Mammary epithelial cell (primary cell): ENCODE measurements at regions of chr10 and their contacts with region 1.

Region 1: GRCh38 chr10:99461230-99461629 is 30.8 kb upstream of the GOT1 start:
- DNase-seq: peak; percentile 80
- H3K4me3 ChIP-seq: no peak overlapping the region
- H3K27ac ChIP-seq: no peak overlapping the region
- H3K4me1 ChIP-seq: peaks cover 4% of the 10 kb centered on the region
- H3K27me3 ChIP-seq: no peaks in the 10 kb centered on the region
- CTCF ChIP-seq: no peak

Region 2: GRCh38 chr10:99406149-99406548 is 55.1 kb before region 1 on chr10:
- CTCF ChIA-PET with region 1: no interaction called
- dilution Hi-C with region 1: loop called (anchors 5 kb)
- in situ Hi-C with region 1: no loop called
- intact Hi-C with region 1: no loop called
- DNase-seq: no peak
- H3K4me3 ChIP-seq: no peak overlapping the region
- H3K27ac ChIP-seq: no peak overlapping the region
- H3K4me1 ChIP-seq: no peaks in the 10 kb centered on the region
- H3K27me3 ChIP-seq: no peaks in the 10 kb centered on the region
- CTCF ChIP-seq: no peak